ENCODE measurements at regions of chr12 and their contacts with region 1.

Region 1: GRCh38 chr12:58540480-58541299 is 379.6 kb downstream of the LRIG3 start:
- DNase-seq: peak; percentile 3
- ATAC-seq: peak; percentile 92
- H3K4me3 ChIP-seq: no peak overlapping the region
- H3K27ac ChIP-seq: no peak overlapping the region
- H3K4me1 ChIP-seq: no peaks in the 10 kb centered on the region
- H3K27me3 ChIP-seq: no peaks in the 10 kb centered on the region
- CTCF ChIP-seq: peak; percentile 52 to 74 (median 63)
- EP300 ChIP-seq: no peak
- POLR2A ChIP-seq: no peak
- RAD21 ChIP-seq: peak; percentile 69

Region 2: DNA sequence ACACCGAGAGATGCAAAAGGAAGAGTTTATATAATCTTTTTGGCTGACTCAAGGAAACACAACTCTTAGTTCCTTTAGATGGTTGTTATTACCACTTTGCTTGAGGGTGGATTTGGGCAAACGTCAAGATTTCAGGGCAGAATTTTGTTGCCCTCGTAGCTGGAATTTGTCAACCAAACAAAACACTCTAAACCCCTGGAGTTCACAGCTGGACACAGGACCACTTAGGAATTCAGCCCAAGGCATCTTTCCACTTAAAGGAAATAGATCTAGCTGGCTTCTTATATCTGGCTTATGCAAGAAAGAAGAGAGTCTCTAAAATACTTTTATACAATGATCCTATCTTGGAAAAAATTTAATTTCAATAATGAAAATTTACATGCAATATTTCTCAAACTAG is 617.4 kb after region 1 on chr12:
- CTCF ChIA-PET with region 1: no interaction called
- POLR2A ChIA-PET with region 1: no interaction called
- RAD21 ChIA-PET with region 1: no interaction called
- SMC1A ChIA-PET with region 1: no interaction called
- in situ Hi-C with region 1: loop called (anchors 5 kb)
- intact Hi-C with region 1: no loop called
- DNase-seq: no peak
- ATAC-seq: no peak
- H3K4me3 ChIP-seq: no peak overlapping the region
- H3K27ac ChIP-seq: no peak overlapping the region
- H3K4me1 ChIP-seq: no peaks in the 10 kb centered on the region
- H3K27me3 ChIP-seq: no peaks in the 10 kb centered on the region
- CTCF ChIP-seq: no peak
- EP300 ChIP-seq: no peak
- POLR2A ChIP-seq: no peak
- RAD21 ChIP-seq: no peak

Region 3: DNA sequence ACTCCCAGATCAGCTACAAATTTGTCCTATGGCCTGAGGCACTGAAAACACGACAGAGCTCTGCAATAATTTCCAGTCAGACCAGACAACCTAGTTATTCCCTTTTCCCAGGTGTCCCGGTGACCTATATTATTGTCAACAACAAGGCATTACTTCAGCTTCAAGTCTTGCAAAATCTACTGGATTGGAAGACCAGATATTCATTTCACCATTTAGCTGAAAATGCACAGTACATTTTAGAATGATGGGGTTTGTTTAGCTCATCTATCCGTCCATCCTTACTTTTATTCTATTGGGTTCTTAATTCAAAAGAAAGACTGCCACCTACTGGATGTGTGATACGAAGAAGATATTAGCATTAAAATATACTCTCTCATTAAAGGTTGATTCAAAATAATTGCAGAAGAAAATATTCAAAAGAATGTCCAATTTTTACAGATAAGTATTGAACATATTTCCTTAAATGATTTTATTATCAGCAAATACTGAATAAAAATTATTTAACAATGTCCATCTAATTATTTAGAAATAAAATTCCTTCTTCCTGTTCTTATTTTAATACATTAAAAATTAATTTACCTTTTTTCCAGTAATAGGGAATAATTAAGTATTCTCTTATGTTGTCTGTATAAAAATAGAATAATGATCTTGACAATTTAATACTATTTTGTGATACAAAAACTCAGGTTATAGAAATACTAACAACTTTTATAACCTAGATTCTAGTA is 624.5 kb after region 1 on chr12:
- CTCF ChIA-PET with region 1: interaction called, 11 read pairs
- POLR2A ChIA-PET with region 1: no interaction called
- RAD21 ChIA-PET with region 1: no interaction called
- SMC1A ChIA-PET with region 1: interaction called, 3 read pairs
- in situ Hi-C with region 1: no loop called
- intact Hi-C with region 1: no loop called
- DNase-seq: no peak
- ATAC-seq: no peak; the same call in 2 of the 3 replicates
- H3K4me3 ChIP-seq: no peak overlapping the region
- H3K27ac ChIP-seq: no peak overlapping the region
- H3K4me1 ChIP-seq: no peaks in the 10 kb centered on the region
- H3K27me3 ChIP-seq: no peaks in the 10 kb centered on the region
- CTCF ChIP-seq: peak in 1 of 3 experiments; percentile 32; a peak in 2 of 6 replicates
- EP300 ChIP-seq: no peak
- POLR2A ChIP-seq: no peak
- RAD21 ChIP-seq: no peak